ENCODE measurements at regions of chr6 and their contacts with region 1.

Region 1: DNA sequence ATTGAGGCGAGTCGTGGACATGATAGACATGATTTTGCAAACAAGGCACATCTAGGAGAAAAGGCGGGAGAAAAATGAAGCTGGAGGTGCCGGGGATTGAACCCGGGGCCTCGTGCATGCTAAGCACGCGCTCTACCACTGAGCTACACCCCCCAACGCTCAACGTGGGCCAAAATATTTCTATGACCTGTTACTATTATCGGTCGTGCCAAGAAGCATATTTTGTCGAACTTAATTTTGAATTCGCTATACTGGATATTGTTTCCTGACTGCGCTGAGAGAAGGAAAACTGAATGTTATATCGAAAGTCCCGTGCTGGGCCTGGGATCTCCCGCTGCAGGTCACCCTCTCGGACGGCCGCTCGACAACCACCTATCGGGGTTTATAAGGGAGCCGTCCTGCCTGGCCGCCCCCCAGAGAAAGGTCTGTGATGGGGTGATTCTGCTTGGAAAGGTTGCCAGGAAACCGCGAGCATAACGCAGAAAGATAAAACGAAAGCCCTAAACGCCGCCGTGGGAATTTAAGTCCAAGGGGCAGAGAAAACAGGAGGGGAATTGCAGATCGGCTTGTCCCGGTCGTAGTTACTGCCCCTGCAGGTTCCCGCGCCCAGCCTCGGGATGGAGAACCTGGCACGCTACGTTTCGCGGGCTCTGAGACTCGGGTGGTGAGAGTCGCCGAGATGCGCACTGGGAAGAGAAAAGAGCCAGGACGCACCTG is 60.0 kb downstream of the TRIM27 start:
- DNase-seq: peak in 1 of 2 experiments; percentile 91
- H3K4me3 ChIP-seq: peak overlapping the region; percentile 89 to 97 (median 92)
- H3K27ac ChIP-seq: no peak overlapping the region
- H3K4me1 ChIP-seq: peaks cover 0 to 4% (median 1%) of the 10 kb centered on the region in 4 experiments; a peak in 3 of 7 replicates
- H3K27me3 ChIP-seq: 0 out of 7 replicates have a peak, but pooled peaks cover 0 to 4% (median 0%) of the 10 kb centered on the region in 4 experiments
- CTCF ChIP-seq: no peak
- EP300 ChIP-seq: no peak
- POLR2A ChIP-seq: 0 out of 3 replicates have a peak, but pooled peaks of 1 of the 2 experiments have one; percentile 25
- RAD21 ChIP-seq: peak in 1 of 2 experiments; percentile 10; a peak in 1 of 4 replicates

Region 2: DNA sequence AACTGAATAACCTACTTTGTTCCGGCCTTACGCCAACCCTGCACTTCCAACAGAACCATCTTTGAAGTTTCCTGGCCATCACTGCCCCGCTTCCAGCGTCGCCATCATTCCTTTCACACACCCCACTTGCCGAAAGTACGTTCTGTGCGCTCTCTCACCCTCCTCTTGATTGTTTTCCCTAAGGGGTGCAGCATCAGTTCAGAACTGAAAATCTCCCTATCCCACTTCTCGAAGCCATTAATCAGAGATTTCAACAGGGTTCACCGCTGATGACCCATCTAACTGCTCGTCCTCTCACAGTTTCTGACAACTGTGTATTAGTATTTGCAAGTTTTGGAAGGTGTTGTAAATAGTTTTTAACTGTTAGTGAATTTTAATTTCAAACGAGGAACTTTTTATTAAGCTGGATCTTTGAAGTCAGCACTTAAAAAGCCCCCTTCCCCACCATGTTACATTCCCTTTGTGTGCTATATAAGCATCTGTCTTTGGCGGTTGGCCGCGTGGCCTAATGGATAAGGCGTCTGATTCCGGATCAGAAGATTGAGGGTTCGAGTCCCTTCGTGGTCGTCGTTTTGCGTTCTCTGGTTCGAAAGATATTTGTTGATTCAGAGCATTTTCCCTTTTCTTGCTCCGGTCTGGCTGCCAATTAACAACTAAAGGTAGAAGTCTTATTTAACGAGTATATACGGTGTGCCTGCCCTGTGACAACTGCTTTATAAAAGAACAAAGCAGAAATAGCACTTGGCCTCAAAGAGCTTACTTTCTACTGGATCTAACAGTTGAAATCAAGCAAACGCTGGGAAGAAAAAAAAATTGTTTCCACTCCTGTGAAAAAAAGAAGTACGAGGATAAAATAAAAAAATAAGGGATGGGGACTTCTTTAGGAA is 17.4 kb after region 1 on chr6:
- CTCF ChIA-PET with region 1: interaction called, 10 read pairs
- POLR2A ChIA-PET with region 1: interaction called, 52 read pairs
- DNase-seq: peak in 1 of 2 experiments; percentile 96
- H3K4me3 ChIP-seq: peak overlapping the region; percentile 84 to 99 (median 86)
- H3K27ac ChIP-seq: peak overlapping the region; percentile 40; the same call in 1 of the 2 replicates
- H3K4me1 ChIP-seq: peaks cover 0 to 4% (median under 1%) of the 10 kb centered on the region in 4 experiments; a peak in 3 of 7 replicates
- H3K27me3 ChIP-seq: no peaks in the 10 kb centered on the region
- CTCF ChIP-seq: no peak
- EP300 ChIP-seq: no peak
- POLR2A ChIP-seq: no peak
- RAD21 ChIP-seq: no peak

Region 3: DNA sequence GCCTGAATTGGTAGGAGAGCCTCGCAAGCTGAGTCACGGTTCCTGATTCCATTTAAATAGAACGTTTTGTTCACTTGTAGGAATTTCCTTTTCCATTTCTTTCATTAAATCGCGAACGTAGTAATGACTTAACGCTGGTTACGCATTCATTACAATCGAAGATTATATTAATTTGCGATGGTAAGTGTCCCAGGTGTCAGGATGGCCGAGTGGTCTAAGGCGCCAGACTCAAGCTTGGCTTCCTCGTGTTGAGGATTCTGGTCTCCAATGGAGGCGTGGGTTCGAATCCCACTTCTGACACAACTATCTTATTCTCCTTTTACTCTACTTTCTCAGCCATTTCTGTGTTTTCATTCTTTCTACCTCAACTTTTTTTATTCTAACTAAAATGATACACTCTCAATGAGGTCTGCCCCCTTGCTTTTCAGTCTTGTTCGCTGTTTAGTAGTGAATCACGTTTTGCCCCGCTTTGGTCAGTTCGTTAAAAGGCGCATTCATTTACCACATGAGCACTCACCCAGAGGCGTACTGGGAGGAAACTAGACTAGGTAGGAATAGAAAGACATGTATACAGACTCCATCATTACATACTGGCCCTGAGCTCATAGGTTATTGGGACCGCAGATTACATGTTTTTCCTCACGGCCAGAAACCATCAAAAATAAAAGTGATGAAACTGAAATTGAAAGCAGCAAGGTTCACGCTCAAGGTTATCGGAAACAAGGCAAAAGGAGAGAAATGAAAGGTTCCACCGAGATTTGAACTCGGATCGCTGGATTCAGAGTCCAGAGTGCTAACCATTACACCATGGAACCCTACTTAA is 77.3 kb after region 1 on chr6:
- CTCF ChIA-PET with region 1: no interaction called
- POLR2A ChIA-PET with region 1: interaction called, 10 read pairs
- DNase-seq: peak; percentile 70 to 86
- H3K4me3 ChIP-seq: peak overlapping the region; percentile 50 to 90 (median 71)
- H3K27ac ChIP-seq: no peak overlapping the region
- H3K4me1 ChIP-seq: no peaks in the 10 kb centered on the region
- H3K27me3 ChIP-seq: no peaks in the 10 kb centered on the region
- CTCF ChIP-seq: no peak
- EP300 ChIP-seq: no peak
- POLR2A ChIP-seq: no peak
- RAD21 ChIP-seq: no peak